ENCODE measurements at regions of chr9 and their contacts with region 1.

Region 1: GRCh38 chr9:121222524-121223171 is 21.0 kb upstream of the RAB14 start:
- DNase-seq: no peak
- ATAC-seq: peak in 5 of 8 donors; percentile 37 to 69 (median 44)
- H3K4me3 ChIP-seq: no peak overlapping the region
- H3K27ac ChIP-seq: no peak overlapping the region
- H3K4me1 ChIP-seq: peaks cover 0 to 23% (median 0%) of the 10 kb centered on the region in 9 donors
- H3K27me3 ChIP-seq: no peaks in the 10 kb centered on the region
- CTCF ChIP-seq: peak; percentile 54 to 84 (median 74)

Region 2: GRCh38 chr9:121246821-121247561 is 24.3 kb after region 1 on chr9:
- intact Hi-C with region 1: no loop called
- DNase-seq: peak in 1 of 2 donors; percentile 28
- ATAC-seq: peak; percentile 33 to 80 (median 59)
- H3K4me3 ChIP-seq: no peak overlapping the region
- H3K27ac ChIP-seq: peak overlapping the region in 3 of 10 donors; percentile 8 to 34 (median 19)
- H3K4me1 ChIP-seq: peaks cover 0 to 29% (median 0%) of the 10 kb centered on the region in 9 donors
- H3K27me3 ChIP-seq: no peaks in the 10 kb centered on the region
- CTCF ChIP-seq: no peak

Region 3: DNA sequence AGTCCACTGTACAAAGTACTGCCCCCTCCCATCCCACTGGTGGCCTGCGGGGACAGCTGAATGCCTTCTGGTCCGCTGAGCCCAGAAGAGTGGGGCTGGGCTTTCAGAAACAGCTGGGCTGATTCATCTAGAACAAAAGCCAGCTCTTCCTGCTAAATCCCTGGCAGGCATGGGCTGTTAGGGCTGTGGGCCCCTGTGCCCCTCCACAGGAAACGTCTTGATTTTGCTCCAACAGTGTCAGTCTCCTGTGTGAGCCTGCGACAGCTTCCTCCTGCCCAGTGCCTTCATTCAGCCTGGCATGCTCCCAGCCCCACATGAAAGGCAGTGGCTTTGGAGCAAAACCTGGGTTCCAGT is 38.4 kb after region 1 on chr9:
- intact Hi-C with region 1: loop called in 4 of 10 experiments (anchors 5 kb)
- DNase-seq: no peak
- ATAC-seq: peak; percentile 61 to 83 (median 69)
- H3K4me3 ChIP-seq: no peak overlapping the region
- H3K27ac ChIP-seq: peak overlapping the region in 2 of 10 donors; percentile 24 to 49
- H3K4me1 ChIP-seq: peaks cover 0 to 31% (median 15%) of the 10 kb centered on the region in 9 donors
- H3K27me3 ChIP-seq: no peaks in the 10 kb centered on the region
- CTCF ChIP-seq: no peak

Region 4: DNA sequence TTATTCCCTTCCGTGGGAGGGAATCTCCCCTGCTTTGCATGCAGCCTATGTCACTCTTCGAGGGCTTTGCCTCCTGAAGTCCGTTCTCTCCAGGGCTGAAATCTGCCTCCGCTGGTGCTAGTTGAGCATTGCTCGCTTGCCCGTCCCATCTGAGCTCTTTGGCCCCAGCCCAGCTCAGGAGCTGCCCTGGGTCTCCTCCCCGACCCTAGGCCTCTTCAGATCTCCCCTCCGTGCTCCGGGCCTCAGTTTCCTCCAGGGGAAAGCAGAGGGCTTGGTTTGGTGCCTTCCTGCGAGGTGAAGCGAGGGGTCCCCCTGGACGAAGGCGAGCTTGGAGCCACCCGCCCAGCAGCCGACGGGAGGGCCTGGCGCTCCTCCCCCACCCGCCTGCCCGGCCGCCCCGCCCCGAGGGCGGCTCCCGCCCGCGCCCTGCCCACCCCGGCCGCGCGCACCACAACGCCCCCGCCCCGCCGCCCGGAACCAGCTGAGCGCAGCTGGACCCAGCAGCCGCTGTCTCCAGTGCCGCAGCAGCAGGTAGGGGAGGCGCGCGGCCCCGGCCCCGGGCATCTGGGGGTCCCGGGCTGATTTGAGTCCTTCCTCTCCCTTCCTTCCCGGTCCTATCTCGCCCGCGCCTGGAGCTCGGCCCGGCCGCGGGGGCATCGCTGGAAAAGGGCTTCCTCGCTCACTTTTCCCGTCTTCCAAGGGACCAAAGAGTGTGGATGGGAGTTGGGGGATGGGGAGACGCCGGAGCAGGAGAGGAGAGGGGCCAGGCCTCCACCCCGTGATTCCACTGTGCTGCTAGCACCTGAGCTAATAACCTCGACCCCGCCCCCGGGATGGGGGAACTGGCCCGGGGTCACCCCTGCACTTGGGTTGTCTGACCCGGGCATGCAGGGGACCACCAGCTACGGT is 45.3 kb after region 1 on chr9 and contains the start of gene GSN:
- intact Hi-C with region 1: loop called in 5 of 10 experiments (anchors 5 to 10 kb)
- DNase-seq: peak; percentile 86 to 89
- ATAC-seq: peak; percentile 83 to 94 (median 90)
- H3K4me3 ChIP-seq: peak within 1 kb of the TSS; percentile 79 to 95 (median 90)
- H3K27ac ChIP-seq: peak within 1 kb of the TSS; percentile 70 to 92 (median 88)
- H3K4me1 ChIP-seq: peaks cover 8 to 66% (median 57%) of the 10 kb centered on the region in 9 donors
- H3K27me3 ChIP-seq: no peaks in the 10 kb centered on the region
- CTCF ChIP-seq: peak in 3 of 9 donors; percentile 13 to 17 (median 16)
- total RNA-seq, gene GSN: 532 to 861 (median 668) TPM

Region 5: GRCh38 chr9:121305269-121305994 is 82.8 kb after region 1 on chr9:
- intact Hi-C with region 1: loop called in 3 of 10 experiments (anchors 5 to 10 kb)
- DNase-seq: peak; percentile 75 to 80
- ATAC-seq: peak; percentile 36 to 77 (median 67)
- H3K4me3 ChIP-seq: peak overlapping the region in 7 of 10 donors; percentile 1 to 81 (median 75)
- H3K27ac ChIP-seq: peak overlapping the region in 9 of 10 donors; percentile 44 to 100 (median 68)
- H3K4me1 ChIP-seq: peaks cover 19 to 99% (median 54%) of the 10 kb centered on the region in 9 donors
- H3K27me3 ChIP-seq: no peaks in the 10 kb centered on the region
- CTCF ChIP-seq: no peak